Motor neuron (in vitro differentiated cells): ENCODE measurements at regions of chr20 and their contacts with region 1.

Region 1: DNA sequence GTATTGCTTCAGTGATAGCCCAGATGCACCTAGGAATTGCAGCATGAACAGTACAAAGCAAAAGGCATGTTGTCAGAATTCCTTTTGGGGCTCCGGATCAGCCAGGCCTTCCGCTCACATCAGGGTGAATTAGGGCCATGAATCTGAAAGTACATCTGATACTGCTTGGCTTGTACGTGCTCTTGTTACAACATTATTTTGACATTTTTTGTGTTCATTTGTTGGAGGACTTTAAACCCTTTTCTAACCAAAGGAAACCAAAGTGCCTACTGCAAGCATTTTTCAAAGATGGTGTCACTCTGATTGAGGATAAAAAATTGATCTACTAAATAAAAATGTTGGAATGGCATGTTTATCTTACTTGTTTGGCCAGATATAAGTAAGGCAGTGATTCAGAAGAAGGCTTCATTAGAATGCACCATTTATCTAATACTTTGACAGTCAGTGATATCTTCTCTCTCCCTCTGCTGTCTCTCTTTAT is 1005.7 kb upstream of the FLRT3 start:
- ATAC-seq: no peak
- H3K4me3 ChIP-seq: no peak overlapping the region
- H3K27ac ChIP-seq: no peak overlapping the region
- H3K4me1 ChIP-seq: peaks cover 5 to 8% of the 10 kb centered on the region in 2 donors

Region 2: DNA sequence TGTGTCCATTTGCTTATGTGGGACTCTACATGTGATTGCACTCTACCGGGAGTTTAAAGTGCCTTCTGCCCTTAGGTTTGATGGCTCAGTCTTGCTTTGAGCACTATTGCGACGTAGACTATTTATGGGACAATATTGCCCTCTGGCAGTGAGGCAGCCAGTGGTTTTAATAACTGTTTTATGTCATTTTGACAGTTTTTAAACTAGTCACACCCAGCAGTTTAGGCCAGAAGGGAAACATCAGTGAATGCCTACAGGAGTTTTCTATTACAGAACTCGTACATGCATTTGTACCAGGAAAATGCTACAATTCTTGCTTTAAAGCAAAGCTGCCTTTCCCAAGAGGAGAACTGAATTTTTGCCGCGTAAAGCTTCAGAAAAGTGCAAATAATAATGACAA is 416.5 kb after region 1 on chr20:
- in situ Hi-C with region 1: no loop called
- ATAC-seq: peak in 5 of 8 experiments; percentile 44 to 86 (median 54)
- H3K4me3 ChIP-seq: no peak overlapping the region
- H3K27ac ChIP-seq: no peak overlapping the region
- H3K4me1 ChIP-seq: no peaks in the 10 kb centered on the region

Region 3: GRCh38 chr20:15857173-15857784 is 514.2 kb after region 1 on chr20:
- in situ Hi-C with region 1: no loop called
- ATAC-seq: peak in 2 of 8 experiments; percentile 30 to 52
- H3K4me3 ChIP-seq: no peak overlapping the region
- H3K27ac ChIP-seq: no peak overlapping the region
- H3K4me1 ChIP-seq: peaks cover 6 to 10% of the 10 kb centered on the region in 2 donors

Region 4: DNA sequence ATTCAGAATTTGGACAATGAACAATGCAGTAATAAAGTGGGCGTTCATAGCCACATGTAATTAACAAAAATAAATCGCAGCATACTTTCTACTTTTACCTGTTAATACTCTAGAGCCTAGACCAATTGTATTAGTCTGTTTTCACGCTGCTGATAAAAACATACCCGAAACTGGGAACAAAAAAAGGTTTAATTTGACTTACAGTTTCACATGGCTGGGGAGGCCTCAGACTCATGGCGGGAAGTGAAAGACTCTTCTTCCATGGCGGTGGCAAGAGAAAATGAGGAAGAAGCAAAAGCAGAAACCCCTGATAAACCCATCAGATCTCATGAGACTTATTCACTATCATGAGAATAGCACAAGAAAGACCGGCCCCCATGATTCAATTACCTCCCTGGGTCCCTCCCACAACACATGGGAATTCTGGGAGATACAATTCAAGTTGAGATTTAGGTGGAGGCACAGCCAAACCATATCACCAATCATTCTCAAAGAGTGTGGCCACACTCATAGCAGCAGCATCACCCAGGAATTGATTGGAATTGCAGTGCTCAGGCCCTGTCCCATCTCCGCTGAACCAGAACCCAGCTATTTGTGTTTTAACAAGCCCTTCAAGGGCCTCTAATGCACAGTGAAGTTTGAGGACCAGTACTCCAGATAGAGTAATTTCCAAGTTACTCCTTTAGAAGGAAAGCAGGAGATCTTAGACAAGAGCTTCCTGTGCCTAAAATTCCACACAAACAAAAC is 580.1 kb after region 1 on chr20:
- in situ Hi-C with region 1: loop called in 1 of 9 experiments (anchors 10 kb)
- ATAC-seq: no peak
- H3K4me3 ChIP-seq: no peak overlapping the region
- H3K27ac ChIP-seq: no peak overlapping the region
- H3K4me1 ChIP-seq: no peaks in the 10 kb centered on the region